Activated T-helper 1 cell treated with anti-CD3 and anti-CD28 coated beads, Interleukin-12 subunit alpha, Interleukin-12 subunit beta, Interleukin-2, Interleukin-4 antibody, amounts not matched to agents 30 ng/mL and 10 ng/mL and 1 ng/mL, durations not matched to agents 14 hours and 24 hours and 36 hours (primary cell): ENCODE measurements at regions of chr9 and their contacts with region 1.

Region 1: GRCh38 chr9:93463638-93464248 is 10.4 kb upstream of the FAM120AOS start:
- DNase-seq: no peak
- H3K4me3 Mint-ChIP-seq: peak overlapping the region; percentile 77
- H3K27ac Mint-ChIP-seq: peak overlapping the region; percentile 93
- H3K4me1 Mint-ChIP-seq: peaks cover 88% of the 10 kb centered on the region
- H3K27me3 Mint-ChIP-seq: no peaks in the 10 kb centered on the region

Region 2: DNA sequence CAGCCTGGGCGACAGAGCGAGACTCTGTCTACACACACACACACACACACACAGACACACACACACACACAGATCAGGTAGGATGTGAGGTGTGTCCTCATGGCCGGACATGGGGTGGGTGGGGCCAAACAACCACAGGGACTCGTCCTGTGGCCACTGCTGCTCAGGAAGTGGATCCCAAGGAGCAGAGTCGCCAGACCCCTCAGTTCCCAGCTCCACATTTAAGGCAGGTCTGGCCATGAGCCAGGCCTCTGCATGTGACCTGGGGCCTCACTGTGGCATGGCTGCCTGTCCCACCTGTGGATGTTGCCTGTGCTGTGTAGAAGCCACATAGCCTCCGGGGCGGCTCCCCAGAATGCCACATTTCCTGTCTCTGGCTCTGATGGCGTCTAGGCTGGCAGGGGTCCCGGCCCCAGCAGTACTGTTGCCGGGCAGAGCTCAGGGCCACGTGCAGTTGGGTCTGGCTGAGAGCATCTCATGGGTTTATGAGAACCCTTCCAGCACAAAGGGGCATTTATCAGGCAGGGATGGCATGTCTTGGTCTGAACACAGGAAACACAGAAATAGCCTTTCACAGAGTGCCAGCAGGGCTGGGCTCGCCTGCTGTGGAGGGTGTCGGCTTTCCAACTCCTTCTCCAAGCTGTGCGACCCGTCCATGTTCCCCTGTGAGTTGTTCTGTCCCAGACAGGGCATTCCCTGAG is 319.8 kb before region 1 on chr9:
- intact Hi-C with region 1: no loop called
- DNase-seq: peak; percentile 43
- H3K4me3 Mint-ChIP-seq: no peak overlapping the region
- H3K27ac Mint-ChIP-seq: peak overlapping the region; percentile 93
- H3K4me1 Mint-ChIP-seq: peaks cover 38% of the 10 kb centered on the region
- H3K27me3 Mint-ChIP-seq: no peaks in the 10 kb centered on the region

Region 3: DNA sequence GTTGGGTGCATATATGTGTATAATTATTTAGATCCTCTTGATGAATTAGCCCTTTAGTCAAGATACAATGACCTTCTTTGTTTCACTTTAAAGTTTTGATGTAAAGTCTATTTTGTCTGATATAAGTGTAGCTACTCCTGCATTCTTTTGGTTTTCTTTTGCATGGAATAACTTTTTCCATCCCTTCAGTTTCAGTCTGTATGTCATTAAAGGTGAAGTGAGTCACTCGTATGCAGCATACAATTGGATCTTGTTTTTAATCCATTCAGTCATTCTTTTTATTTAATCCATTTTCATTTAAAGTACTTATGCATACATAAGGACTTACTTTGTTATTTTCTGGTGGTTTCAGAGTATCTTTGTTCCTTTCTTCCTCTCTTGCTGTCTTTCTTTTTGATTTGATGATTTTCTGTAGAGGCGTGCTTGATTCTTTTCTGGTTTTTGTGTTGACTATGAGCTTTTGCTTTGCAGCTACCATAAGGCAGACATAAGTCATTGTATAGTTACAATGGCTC is 48.5 kb before region 1 on chr9:
- intact Hi-C with region 1: no loop called
- DNase-seq: no peak
- H3K4me3 Mint-ChIP-seq: no peak overlapping the region
- H3K27ac Mint-ChIP-seq: no peak overlapping the region
- H3K4me1 Mint-ChIP-seq: peaks cover 7% of the 10 kb centered on the region
- H3K27me3 Mint-ChIP-seq: peaks cover 36% of the 10 kb centered on the region

Region 4: GRCh38 chr9:93501406-93501805 is 37.7 kb after region 1 on chr9:
- intact Hi-C with region 1: loop called (anchors 2 kb)
- DNase-seq: no peak
- H3K4me3 Mint-ChIP-seq: peak overlapping the region; percentile 81
- H3K27ac Mint-ChIP-seq: peak overlapping the region; percentile 72
- H3K4me1 Mint-ChIP-seq: peaks cover 49% of the 10 kb centered on the region
- H3K27me3 Mint-ChIP-seq: no peaks in the 10 kb centered on the region